Gastrocnemius medialis (tissue), 4 donors: ENCODE measurements at regions of chr1 and their contacts with region 1.

Region 1: DNA sequence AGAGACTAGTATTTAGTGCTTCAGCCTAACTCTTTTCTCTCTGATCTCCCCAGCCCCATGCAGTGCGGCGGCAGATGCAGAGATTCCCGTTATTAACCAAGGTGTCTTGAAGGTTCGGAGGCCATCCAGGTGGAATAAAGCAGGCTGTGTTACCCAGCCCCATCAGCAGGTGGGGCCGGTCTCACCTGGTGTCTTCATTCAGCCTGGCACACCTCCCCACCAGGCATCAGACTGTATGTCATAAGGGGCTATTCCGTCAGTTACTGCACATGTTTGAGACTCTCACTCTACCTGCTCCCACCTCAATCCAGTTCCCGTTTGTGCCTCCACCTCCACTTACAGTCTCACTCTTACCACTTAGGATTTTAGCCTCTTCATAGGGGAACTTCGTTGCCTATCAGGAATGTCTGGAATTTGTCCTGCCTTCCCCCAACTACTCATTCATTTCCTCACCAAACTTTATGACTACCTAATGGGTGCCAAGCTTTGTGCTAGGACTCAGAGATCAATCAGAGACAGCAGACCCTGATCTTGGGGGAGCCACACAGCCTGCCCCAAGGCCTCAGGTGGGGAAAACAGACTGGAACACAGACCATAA is 170.2 kb downstream of the PLPP3 start:
- DNase-seq: peak in 1 of 2 donors; percentile 30
- ATAC-seq: peak in 1 of 2 donors; percentile 54
- H3K4me3 ChIP-seq: no peak overlapping the region
- H3K27ac ChIP-seq: no peak overlapping the region
- H3K4me1 ChIP-seq: no peaks in the 10 kb centered on the region
- H3K27me3 ChIP-seq: no peaks in the 10 kb centered on the region
- CTCF ChIP-seq: peak; percentile 21 to 72 (median 41)
- POLR2A ChIP-seq: no peak

Region 2: DNA sequence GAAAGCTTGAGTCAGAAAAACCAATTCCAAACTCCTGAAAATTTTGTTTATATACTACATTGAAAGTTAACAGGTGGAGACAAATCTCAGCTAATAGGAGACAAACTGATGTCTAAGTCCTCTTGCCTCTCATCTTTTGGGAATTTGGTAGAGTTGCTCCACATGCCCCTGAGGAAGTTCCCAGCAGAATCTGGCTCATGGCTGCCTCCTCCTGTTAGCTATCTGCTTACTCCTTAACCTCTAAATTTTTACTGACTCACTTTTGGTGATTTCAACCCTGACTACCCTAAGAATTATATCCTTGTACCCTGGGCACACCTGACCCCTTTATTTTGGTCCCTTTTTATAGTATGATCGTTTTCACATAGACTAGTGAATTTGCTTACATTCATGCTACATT is 560.3 kb before region 1 on chr1:
- in situ Hi-C with region 1: no loop called
- intact Hi-C with region 1: no loop called
- DNase-seq: peak in 1 of 2 donors; percentile 15
- ATAC-seq: no peak
- H3K4me3 ChIP-seq: no peak overlapping the region
- H3K27ac ChIP-seq: no peak overlapping the region
- H3K4me1 ChIP-seq: no peaks in the 10 kb centered on the region
- H3K27me3 ChIP-seq: no peaks in the 10 kb centered on the region
- CTCF ChIP-seq: no peak
- POLR2A ChIP-seq: no peak

Region 3: DNA sequence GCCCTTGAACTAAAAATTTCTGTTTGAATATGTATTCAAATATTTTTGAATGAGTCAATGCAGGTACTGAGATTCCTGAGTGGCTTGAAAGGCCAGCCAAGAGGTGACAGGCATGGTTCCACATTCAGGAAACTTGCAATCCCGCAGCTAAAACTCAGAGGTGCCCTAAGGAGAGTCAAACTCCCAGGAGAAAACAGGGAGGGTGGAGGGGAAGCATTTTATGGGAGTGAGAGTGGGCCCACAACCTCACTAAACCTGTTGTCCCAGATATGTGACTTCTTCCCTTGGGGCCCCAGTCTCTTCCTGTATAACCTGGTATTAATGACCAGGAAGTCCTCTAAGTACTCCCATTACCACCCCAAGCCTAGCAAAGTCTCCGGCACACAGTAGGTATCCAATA is 19.4 kb before region 1 on chr1:
- in situ Hi-C with region 1: no loop called
- intact Hi-C with region 1: loop called (anchors 2 kb)
- DNase-seq: no peak
- ATAC-seq: no peak
- H3K4me3 ChIP-seq: no peak overlapping the region
- H3K27ac ChIP-seq: no peak overlapping the region
- H3K4me1 ChIP-seq: peaks cover 0 to 4% of the 10 kb centered on the region in 2 donors
- H3K27me3 ChIP-seq: no peaks in the 10 kb centered on the region
- CTCF ChIP-seq: no peak
- POLR2A ChIP-seq: no peak